ENCODE measurements at regions of chr11 and their contacts with region 1.

Region 1: DNA sequence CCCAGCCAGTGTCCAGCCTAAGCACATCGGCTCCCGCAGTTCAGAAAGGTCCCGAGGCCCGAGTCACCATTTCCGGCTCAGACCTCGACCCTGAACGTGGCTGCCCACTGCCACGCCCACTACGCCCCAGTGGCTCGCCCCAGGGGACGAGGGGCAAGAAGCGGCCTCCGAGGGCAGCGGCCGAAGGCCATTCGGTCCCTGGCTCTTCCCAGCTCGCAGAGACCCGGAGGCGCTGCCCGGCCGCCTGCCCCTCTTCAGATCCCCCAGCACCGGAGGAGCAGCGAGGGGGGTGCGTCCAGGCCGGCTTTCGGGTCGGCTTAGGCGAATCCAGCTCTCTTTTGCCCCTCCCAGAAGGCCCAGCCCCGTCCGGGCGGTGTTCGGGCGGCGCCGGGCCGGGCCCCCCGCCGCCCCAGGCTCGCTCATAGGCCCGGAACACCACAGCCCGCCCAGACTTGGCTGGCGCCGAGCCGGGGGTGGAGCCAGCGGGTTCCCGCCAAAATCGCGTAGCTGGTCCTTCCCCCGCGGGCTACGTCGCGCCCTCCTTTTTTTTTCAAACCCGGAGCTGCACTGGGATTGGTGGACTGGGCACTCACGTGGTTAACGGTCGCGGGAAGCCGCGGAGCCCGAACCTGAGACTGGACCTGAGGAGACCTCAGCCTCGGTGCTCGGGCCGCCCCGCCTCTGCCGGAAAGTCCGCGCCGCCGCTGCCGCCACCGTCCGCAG is at the start of gene WEE1:
- DNase-seq: peak; percentile 99
- H3K4me3 Mint-ChIP-seq: peak within 1 kb of the TSS; percentile 97
- H3K27ac Mint-ChIP-seq: peak within 1 kb of the TSS; percentile 82
- H3K4me1 Mint-ChIP-seq: peaks cover 36% of the 10 kb centered on the region
- H3K27me3 Mint-ChIP-seq: no peaks in the 10 kb centered on the region
- total RNA-seq, gene WEE1: 47.8 to 52.4 TPM

Region 2: GRCh38 chr11:9550191-9550628 is 23.0 kb before region 1 on chr11:
- CTCF ChIA-PET with region 1: no interaction called
- POLR2A ChIA-PET with region 1: no interaction called
- intact Hi-C with region 1: no loop called
- DNase-seq: no peak
- H3K4me3 Mint-ChIP-seq: no peak overlapping the region
- H3K27ac Mint-ChIP-seq: no peak overlapping the region
- H3K4me1 Mint-ChIP-seq: no peaks in the 10 kb centered on the region
- H3K27me3 Mint-ChIP-seq: no peaks in the 10 kb centered on the region

Region 3: DNA sequence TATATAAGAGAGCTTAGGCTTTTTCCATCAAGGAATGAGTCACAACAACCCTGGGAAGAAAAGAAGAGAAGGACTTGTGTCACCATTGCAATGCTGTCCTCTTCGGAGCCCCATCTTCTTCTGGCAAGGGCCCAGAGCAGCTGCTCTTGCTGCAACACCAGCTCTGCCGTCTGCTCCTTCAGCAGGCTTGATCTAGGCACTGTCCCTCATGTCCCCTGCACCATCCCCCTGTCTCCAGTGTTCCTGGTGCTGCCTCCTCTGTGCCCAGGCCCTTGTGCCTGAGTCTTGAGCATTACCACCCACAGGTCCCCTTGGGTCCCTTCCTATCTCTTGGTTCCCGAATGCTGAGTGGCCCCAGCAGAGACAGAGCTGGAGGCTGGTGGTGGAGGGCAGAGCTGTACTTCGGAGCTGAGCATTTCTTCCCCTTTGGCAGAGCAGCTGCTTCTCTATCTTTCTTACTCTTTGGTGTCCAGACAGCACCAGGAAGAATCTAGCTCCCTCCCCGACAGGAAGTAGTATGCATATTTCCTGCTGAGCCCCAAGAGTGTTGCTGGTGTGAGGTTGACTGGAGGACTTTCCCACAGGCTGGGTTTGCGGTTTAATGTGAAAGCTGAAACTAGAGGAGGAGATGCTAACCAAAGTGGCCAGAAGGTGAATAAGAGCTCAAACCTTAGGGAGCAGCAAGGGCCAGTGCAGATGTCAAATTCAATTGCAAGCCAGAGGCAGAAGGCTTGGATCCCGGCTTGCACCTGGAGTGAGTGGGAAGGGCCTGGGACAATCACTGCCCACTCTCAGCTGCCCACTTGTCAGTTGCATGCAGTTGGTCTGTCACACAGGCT is 28.0 kb after region 1 on chr11:
- CTCF ChIA-PET with region 1: interaction called, 10 read pairs
- POLR2A ChIA-PET with region 1: interaction called, 23 read pairs
- intact Hi-C with region 1: loop called (anchors 1 kb)
- DNase-seq: peak; percentile 87
- H3K4me3 Mint-ChIP-seq: peak overlapping the region; percentile 68
- H3K27ac Mint-ChIP-seq: peak overlapping the region; percentile 84
- H3K4me1 Mint-ChIP-seq: peaks cover 24% of the 10 kb centered on the region
- H3K27me3 Mint-ChIP-seq: no peaks in the 10 kb centered on the region

Region 4: GRCh38 chr11:9748361-9748970 is 175.3 kb after region 1 on chr11:
- CTCF ChIA-PET with region 1: interaction called, 11 read pairs
- POLR2A ChIA-PET with region 1: interaction called, 4 read pairs
- intact Hi-C with region 1: no loop called
- DNase-seq: peak; percentile 79
- H3K4me3 Mint-ChIP-seq: no peak overlapping the region
- H3K27ac Mint-ChIP-seq: no peak overlapping the region
- H3K4me1 Mint-ChIP-seq: peaks cover 11% of the 10 kb centered on the region
- H3K27me3 Mint-ChIP-seq: no peaks in the 10 kb centered on the region

Region 5: DNA sequence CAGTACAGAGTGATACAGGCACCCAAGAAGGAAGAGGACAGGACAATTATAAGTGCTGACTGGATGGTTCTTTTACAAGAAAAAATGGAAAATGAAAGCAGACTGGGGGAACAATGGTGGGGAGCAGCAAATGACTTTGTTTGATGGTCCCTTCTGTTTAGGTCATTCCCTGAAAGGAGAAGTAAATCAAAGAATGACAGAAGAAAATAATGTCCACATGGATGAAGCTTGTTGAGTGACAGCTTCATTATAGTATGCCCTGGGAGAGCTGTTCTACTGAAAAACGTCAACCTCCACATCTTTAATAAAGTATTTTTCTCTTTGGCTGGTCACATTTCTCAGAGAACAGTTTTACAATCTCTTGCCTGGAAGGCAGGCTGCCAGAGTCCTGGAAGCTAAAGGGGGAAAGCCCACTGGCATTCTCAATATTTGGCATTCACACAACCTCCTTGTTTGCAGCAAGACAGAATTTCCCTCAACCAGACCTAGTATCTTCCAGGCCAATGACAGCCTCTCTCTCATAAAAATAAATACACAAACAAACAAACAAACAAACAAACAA is 378.6 kb after region 1 on chr11:
- CTCF ChIA-PET with region 1: no interaction called
- POLR2A ChIA-PET with region 1: no interaction called
- intact Hi-C with region 1: no loop called
- DNase-seq: no peak
- H3K4me3 Mint-ChIP-seq: no peak overlapping the region
- H3K27ac Mint-ChIP-seq: no peak overlapping the region
- H3K4me1 Mint-ChIP-seq: no peaks in the 10 kb centered on the region
- H3K27me3 Mint-ChIP-seq: no peaks in the 10 kb centered on the region

Measured in activated CD4-positive, alpha-beta memory T cell treated with anti-CD3 and anti-CD28 coated beads for 36 hours (primary cell).